ENCODE measurements at regions of chr3 and their contacts with region 1.

Region 1: GRCh38 chr3:39107388-39108199 is at the starts of genes GORASP1 and TTC21A:
- DNase-seq: no peak
- H3K4me3 ChIP-seq: peak within 1 kb of the TSS; percentile 70 to 98 (median 89)
- H3K27ac ChIP-seq: peak within 1 kb of the TSS; percentile 92 to 97 (median 96)
- H3K4me1 ChIP-seq: peaks cover 47 to 56% (median 53%) of the 10 kb centered on the region in 4 donors
- H3K27me3 ChIP-seq: no peaks in the 10 kb centered on the region
- CTCF ChIP-seq: no peak
- EP300 ChIP-seq: no peak
- POLR2A ChIP-seq: peak; percentile 77
- total RNA-seq, gene GORASP1: 53.7 to 88.7 (median 67.8) TPM
- total RNA-seq, gene TTC21A: 1.7 to 8.6 (median 3.9) TPM

Region 2: GRCh38 chr3:39051647-39052561 is 55.7 kb before region 1 on chr3 and contains the starts of genes SCN11A and WDR48:
- intact Hi-C with region 1: loop called (anchors 5 kb)
- DNase-seq: peak; percentile 99
- H3K4me3 ChIP-seq: peak within 1 kb of the TSS; percentile 93 to 98 (median 96)
- H3K27ac ChIP-seq: peak within 1 kb of the TSS; percentile 88 to 92 (median 89)
- H3K4me1 ChIP-seq: peaks cover 15 to 41% (median 29%) of the 10 kb centered on the region in 4 donors
- H3K27me3 ChIP-seq: no peaks in the 10 kb centered on the region
- CTCF ChIP-seq: no peak
- EP300 ChIP-seq: no peak
- POLR2A ChIP-seq: peak; percentile 58
- total RNA-seq, gene SCN11A: 0.34 to 0.99 (median 0.56) TPM
- total RNA-seq, gene WDR48: 25.9 to 40.0 (median 29.8) TPM

Region 3: GRCh38 chr3:39189959-39190269 is 82.3 kb after region 1 on chr3:
- intact Hi-C with region 1: loop called (anchors 5 kb)
- DNase-seq: no peak
- H3K4me3 ChIP-seq: no peak overlapping the region
- H3K27ac ChIP-seq: peak overlapping the region in 2 of 4 donors; percentile 13 to 27
- H3K4me1 ChIP-seq: peaks cover 9 to 14% (median 11%) of the 10 kb centered on the region in 4 donors
- H3K27me3 ChIP-seq: no peaks in the 10 kb centered on the region
- CTCF ChIP-seq: peak; percentile 75 to 86 (median 78)
- EP300 ChIP-seq: no peak
- POLR2A ChIP-seq: no peak

Measured in esophagus muscularis mucosa (tissue), 4 donors.